Cardiac septum (tissue), 1 donor: ENCODE measurements at regions of chr15 and their contacts with region 1.

Region 1: DNA sequence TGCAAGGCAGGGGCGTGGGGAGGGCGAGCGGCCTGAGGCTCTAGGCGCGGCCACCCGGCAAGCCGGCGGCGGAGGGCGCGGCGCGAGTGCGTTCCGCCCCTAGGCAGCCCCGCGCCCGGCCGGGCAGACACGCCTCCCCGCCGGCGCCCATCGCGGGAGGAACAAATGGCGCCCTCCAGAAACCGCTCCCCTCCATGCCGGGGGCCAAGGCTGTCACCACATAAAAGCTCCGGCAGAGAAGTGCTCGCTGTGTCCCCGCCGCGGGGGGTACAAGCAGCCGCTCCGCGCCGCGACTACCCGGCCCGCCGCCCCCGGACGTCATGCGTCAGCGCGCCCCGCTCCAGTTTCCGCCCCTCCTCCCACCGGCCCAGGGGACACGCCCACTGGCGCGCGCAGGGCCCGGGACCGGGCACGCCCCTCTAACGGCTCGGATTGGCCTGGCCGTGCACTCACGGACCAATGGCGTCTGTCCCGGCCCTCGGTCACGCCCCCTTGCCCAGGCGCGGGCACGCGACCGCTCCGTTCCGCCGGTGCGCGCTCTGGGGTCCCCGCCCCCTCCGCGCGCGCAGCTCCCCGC is 391 bp upstream of the KLF13 start:
- DNase-seq: peak; percentile 100

Region 2: GRCh38 chr15:30991255-30992072 is 334.8 kb before region 1 on chr15 and contains the start of gene MTMR10:
- intact Hi-C with region 1: loop called (anchors 5 kb)
- DNase-seq: peak; percentile 88
- total RNA-seq, gene MTMR10: 27.5 TPM

Region 3: DNA sequence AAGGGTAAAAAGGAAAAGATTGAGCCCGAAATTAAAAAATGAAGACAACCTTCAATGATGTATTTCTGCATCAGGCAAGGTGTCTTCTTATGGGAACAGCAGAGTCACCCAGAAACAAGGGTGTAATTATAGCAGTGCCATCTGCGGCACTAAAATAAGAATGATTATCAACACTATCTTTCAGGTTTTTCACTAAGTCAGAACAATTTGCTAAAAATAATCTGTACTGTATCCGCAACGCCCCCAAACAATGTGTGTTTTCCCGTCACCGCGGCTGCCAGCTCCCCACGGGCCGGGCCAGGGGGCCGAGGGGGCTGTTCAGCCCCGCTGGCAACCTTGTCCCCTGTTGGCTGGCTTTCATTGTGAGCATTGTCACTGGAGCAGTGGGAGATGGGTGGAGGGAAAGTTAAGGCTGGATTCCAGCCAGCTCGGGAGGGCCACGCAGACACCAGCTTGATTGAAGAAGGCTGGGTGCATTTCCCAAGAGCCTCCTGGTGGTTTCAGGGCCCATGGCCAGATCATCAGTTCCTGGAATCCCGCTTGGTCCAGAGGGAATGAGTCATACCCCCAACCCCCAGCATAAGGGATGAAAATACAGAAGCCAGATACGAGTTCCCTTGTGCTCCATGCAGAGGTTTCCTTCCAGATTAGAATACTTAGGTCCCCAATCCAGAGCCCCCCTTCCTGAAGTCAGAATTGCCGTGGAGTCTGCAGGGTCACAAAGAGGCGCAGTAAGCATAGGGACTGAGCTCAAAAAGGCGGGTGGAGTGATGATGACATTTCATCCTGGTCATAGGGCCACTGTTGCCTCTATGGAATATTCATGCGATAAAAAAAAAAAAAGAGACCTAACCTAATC is 89.8 kb before region 1 on chr15:
- intact Hi-C with region 1: loop called (anchors 5 kb)
- DNase-seq: peak; percentile 88

Region 4: GRCh38 chr15:31396881-31397560 is 70.8 kb after region 1 on chr15:
- intact Hi-C with region 1: loop called (anchors 1 kb)
- DNase-seq: peak; percentile 94

Region 5: GRCh38 chr15:31488426-31489204 is 162.4 kb after region 1 on chr15:
- intact Hi-C with region 1: loop called (anchors 5 kb)
- DNase-seq: no peak